ENCODE measurements at regions of chr9 and their contacts with region 1.

Region 1: GRCh38 chr9:131762356-131762932 is 22.6 kb upstream of the RAPGEF1 start:
- DNase-seq: peak; percentile 78
- H3K4me3 Mint-ChIP-seq: no peak overlapping the region
- H3K27ac Mint-ChIP-seq: no peak overlapping the region
- H3K4me1 Mint-ChIP-seq: peaks cover 10% of the 10 kb centered on the region
- H3K27me3 Mint-ChIP-seq: peaks cover 26% of the 10 kb centered on the region

Region 2: DNA sequence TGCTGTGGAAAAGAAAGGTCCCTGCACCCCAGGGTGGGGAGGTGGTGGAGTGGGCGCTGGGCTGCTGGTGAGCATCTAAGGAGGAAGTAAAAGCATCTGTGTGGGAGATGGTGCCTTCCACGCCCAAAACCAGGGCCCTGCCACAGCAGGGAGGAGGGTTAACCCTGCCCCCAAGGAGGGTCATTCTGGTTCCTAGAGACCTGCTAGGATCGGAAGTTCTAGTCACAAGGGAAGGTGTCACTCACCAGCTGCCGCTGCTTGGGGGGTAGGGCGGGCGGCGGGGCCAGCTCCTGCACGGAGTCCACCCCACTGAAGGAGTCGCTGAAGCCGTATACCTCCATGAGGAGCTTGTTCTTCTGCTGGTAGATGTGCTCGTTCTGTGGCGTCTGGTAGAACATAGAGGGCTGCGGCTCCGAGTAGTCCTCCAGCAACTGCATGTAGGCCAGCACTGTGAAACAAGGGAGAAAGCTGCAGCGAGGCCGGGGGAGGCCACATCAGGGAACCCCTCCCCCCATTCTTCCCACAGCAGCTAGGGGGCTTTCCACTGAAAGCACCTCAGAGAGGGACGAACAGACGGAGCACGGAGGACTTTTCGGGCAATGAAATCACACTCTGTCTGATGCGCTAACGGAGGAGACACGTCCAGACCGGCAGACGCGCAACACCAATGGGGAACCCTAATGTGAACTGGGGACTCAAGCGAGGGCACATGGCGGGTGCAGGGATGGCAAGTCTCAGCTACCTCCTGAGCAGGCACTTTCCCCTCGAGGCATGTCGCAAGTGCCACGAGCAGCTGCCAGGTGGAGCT is 140.7 kb before region 1 on chr9:
- CTCF ChIA-PET with region 1: no interaction called
- POLR2A ChIA-PET with region 1: no interaction called
- DNase-seq: no peak
- H3K4me3 Mint-ChIP-seq: no peak overlapping the region
- H3K27ac Mint-ChIP-seq: peak overlapping the region; percentile 14
- H3K4me1 Mint-ChIP-seq: peaks cover 26% of the 10 kb centered on the region
- H3K27me3 Mint-ChIP-seq: no peaks in the 10 kb centered on the region

Region 3: DNA sequence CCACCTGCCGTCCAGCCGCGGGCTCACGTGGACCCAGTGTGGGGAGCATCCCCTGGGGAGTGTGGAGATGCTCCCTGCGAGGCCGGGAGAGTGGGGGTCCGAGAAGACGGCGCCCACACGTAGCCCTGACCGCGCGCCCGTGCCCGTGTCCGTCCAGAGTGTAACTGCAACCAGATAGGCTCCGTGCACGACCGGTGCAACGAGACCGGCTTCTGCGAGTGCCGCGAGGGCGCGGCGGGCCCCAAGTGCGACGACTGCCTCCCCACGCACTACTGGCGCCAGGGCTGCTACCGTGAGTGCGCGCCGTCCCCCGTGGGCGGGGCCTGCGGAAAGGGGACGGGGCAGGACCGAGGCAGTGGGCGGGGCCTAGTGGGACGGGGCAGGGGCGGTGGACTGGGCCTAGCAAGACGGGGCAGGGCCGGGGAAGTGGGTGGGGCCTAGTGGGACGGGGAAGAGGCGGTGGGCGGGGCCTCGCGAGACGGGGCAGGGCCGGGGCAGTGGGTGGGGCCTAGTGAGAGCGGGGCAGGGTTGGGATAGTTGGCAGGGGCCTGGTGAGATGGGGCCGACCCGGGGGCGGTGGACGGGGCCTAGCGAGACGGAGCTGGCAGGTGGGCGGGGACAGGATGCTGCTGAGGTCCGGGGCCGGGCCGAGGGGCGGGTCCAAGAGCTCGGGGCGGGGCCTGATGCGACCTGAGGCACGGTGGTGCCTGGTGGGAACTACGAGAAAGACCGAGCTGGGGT is 478.5 kb after region 1 on chr9:
- CTCF ChIA-PET with region 1: interaction called, 55 read pairs
- POLR2A ChIA-PET with region 1: interaction called, 3 read pairs
- DNase-seq: peak; percentile 99
- H3K4me3 Mint-ChIP-seq: peak overlapping the region; percentile 90
- H3K27ac Mint-ChIP-seq: peak overlapping the region; percentile 66
- H3K4me1 Mint-ChIP-seq: peaks cover 9% of the 10 kb centered on the region
- H3K27me3 Mint-ChIP-seq: peaks cover 31% of the 10 kb centered on the region

Region 4: DNA sequence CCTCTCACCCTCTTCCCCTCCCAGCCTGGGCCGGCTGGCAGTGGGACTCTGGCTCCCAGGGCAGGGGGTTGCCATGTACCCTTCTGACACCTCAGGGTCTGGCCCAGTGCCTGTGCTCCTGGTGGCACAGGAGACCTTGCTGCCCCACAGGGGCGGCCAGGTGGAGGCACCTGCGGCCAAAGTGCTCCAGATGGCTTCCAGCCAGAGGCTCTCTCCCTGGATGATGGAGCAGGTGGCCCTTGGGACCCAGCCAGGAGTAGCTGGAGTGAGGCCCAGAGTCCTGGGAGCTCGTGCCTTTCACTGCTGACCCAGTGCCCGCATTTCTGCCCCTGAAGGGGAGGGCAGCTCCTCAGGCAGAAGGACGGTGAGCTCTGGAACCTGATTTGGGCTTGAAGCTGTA is 486.7 kb after region 1 on chr9:
- CTCF ChIA-PET with region 1: interaction called, 17 read pairs
- POLR2A ChIA-PET with region 1: no interaction called
- DNase-seq: no peak
- H3K4me3 Mint-ChIP-seq: no peak overlapping the region
- H3K27ac Mint-ChIP-seq: no peak overlapping the region
- H3K4me1 Mint-ChIP-seq: peaks cover 2% of the 10 kb centered on the region
- H3K27me3 Mint-ChIP-seq: peaks cover 20% of the 10 kb centered on the region

Region 5: DNA sequence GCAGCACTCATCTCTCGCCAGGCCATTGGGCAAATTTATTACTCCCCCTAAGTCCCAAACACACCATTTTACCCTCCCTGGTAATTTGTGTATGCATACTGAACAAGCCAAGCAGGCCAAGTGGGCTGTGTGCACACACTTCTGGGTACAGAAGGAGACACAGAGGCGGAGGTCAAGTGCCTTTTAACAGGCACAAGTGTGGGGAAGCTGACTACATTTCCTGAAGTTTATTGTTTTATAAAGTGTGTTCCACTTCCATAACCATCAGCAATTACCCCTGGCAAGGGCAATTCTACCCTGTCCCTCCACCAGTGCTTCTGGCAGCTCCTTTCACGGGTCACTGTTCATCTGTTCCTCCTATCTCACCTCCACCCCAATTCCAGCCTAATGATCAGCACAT is 498.4 kb after region 1 on chr9:
- CTCF ChIA-PET with region 1: interaction called, 11 read pairs
- POLR2A ChIA-PET with region 1: no interaction called
- DNase-seq: no peak
- H3K4me3 Mint-ChIP-seq: no peak overlapping the region
- H3K27ac Mint-ChIP-seq: peak overlapping the region; percentile 5
- H3K4me1 Mint-ChIP-seq: peaks cover 6% of the 10 kb centered on the region
- H3K27me3 Mint-ChIP-seq: no peaks in the 10 kb centered on the region

Measured in activated CD4-positive, alpha-beta memory T cell treated with anti-CD3 and anti-CD28 coated beads, Interleukin-2, amount 10 ng/mL, durations not matched to agents 7 days and 5 days (primary cell).